ENCODE measurements at regions of chr7 and their contacts with region 1.

Region 1: DNA sequence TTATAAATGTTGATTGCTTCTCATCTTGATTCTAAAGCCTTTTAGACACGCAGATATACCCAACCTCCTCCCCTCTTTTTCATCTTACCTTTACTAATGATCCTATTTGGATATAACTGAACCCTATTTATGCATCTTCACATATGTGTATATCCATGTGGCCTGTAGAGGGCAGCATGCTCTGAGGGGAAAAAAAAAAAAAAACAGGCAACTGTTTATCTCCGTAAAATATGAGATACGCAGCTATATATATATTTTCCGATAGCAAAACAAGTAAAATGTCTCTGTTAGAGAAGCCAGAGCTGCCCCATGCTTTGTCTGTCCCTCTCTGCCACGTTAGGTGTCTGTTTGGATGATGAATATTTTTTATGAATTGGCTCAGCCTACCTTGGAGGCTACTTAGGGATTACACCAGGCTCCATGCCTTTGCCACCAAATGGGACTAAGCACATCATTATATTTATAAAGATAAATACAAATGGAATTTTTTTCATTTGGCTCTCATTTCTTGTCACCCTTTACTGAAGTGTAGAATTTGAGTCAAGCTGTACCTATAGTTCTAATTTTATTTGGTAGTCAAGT is 174.8 kb upstream of the FZD1 start:
- DNase-seq: peak; percentile 21
- H3K4me3 ChIP-seq: peak overlapping the region; percentile 28 to 42 (median 31)
- H3K27ac ChIP-seq: peak overlapping the region; percentile 16
- H3K4me1 ChIP-seq: no peaks in the 10 kb centered on the region
- H3K27me3 ChIP-seq: no peaks in the 10 kb centered on the region
- CTCF ChIP-seq: peak; percentile 67 to 83

Region 2: DNA sequence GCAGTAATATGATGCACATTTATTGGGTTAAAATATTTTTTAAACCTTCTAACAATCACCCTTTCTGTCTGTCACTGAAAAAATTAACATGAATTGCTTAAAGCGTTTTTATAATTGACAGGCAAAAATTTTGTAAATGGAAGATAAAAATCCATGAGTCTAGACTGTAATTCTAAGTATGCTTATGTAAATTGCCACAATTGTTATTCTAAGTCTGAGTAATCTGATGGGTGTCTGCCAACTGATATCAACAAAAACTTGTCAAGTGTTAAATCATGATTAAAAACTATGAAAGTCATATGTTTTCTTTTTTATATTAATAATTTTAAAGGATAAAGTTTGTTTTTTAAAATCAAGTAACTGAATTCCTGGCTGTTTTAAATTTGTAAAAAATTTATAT is 285.1 kb before region 1 on chr7:
- CTCF ChIA-PET with region 1: no interaction called
- dilution Hi-C with region 1: no loop called
- in situ Hi-C with region 1: no loop called
- intact Hi-C with region 1: no loop called
- DNase-seq: no peak
- H3K4me3 ChIP-seq: no peak overlapping the region
- H3K27ac ChIP-seq: no peak overlapping the region
- H3K4me1 ChIP-seq: no peaks in the 10 kb centered on the region
- H3K27me3 ChIP-seq: no peaks in the 10 kb centered on the region
- CTCF ChIP-seq: no peak

Region 3: GRCh38 chr7:91264046-91264923 is 174.8 kb after region 1 on chr7 and contains the start of gene FZD1:
- CTCF ChIA-PET with region 1: no interaction called
- dilution Hi-C with region 1: no loop called
- in situ Hi-C with region 1: loop called in 1 of 2 experiments (anchors 10 kb)
- intact Hi-C with region 1: loop called (anchors 1 kb)
- DNase-seq: peak; percentile 99
- H3K4me3 ChIP-seq: peak within 1 kb of the TSS; percentile 63 to 79 (median 74)
- H3K27ac ChIP-seq: peak within 1 kb of the TSS; percentile 53
- H3K4me1 ChIP-seq: peaks cover 22% of the 10 kb centered on the region
- H3K27me3 ChIP-seq: no peaks in the 10 kb centered on the region
- CTCF ChIP-seq: no peak
- total RNA-seq, gene FZD1: 3.0 to 17.7 TPM

Region 4: DNA sequence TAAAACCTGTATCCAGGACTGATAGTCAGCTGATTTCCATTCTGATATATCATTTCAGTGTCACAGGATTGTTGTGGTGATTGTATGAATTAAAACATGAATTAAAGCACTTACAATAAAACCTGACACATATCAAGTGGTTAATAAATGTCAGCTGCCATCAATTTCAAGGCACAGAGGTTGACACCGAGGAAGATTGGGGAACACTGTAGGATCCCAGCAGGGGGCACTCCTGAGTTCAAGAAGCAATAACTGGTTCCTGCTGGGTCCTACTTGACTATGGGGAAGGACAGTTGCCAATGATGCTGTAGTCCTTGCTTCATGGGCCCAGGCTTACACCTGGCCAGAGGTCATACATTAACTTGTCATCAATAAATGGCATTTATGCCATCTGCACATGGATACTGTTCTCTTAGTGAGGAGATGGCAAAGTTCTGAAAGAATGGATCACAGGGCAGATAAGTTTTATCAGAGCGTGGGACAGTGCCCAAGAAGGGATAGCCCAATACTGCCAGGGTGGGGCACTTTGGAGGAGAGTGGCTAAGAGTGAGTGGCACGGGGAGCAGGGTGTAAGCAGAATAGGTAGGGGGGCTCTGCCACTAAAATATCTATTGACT is 198.8 kb after region 1 on chr7:
- CTCF ChIA-PET with region 1: no interaction called
- dilution Hi-C with region 1: no loop called
- in situ Hi-C with region 1: loop called in 1 of 2 experiments (anchors 10 kb)
- intact Hi-C with region 1: no loop called
- DNase-seq: peak; percentile 12
- H3K4me3 ChIP-seq: no peak overlapping the region
- H3K27ac ChIP-seq: no peak overlapping the region
- H3K4me1 ChIP-seq: no peaks in the 10 kb centered on the region
- H3K27me3 ChIP-seq: peaks cover 2% of the 10 kb centered on the region
- CTCF ChIP-seq: peak; percentile 63 to 68

Region 5: GRCh38 chr7:91784463-91784862 is 695.0 kb after region 1 on chr7:
- CTCF ChIA-PET with region 1: no interaction called
- dilution Hi-C with region 1: no loop called
- in situ Hi-C with region 1: loop called (anchors 5 to 25 kb)
- intact Hi-C with region 1: no loop called
- DNase-seq: peak; percentile 53
- H3K4me3 ChIP-seq: no peak overlapping the region
- H3K27ac ChIP-seq: no peak overlapping the region
- H3K4me1 ChIP-seq: no peaks in the 10 kb centered on the region
- H3K27me3 ChIP-seq: no peaks in the 10 kb centered on the region
- CTCF ChIP-seq: peak; percentile 32 to 47

Measured in mammary epithelial cell (primary cell).